Activated CD4-positive, alpha-beta T cell treated with anti-CD3 and anti-CD28 coated beads for 36 hours (primary cell): ENCODE measurements at regions of chr17 and their contacts with region 1.

Region 1: GRCh38 chr17:1365445-1366039 is 34.5 kb downstream of the YWHAE start:
- DNase-seq: peak; percentile 74
- ATAC-seq: peak; percentile 65
- H3K4me3 Mint-ChIP-seq: peak overlapping the region; percentile 21
- H3K27ac Mint-ChIP-seq: no peak overlapping the region
- H3K4me1 Mint-ChIP-seq: peaks cover 71% of the 10 kb centered on the region
- H3K27me3 Mint-ChIP-seq: no peaks in the 10 kb centered on the region

Region 2: DNA sequence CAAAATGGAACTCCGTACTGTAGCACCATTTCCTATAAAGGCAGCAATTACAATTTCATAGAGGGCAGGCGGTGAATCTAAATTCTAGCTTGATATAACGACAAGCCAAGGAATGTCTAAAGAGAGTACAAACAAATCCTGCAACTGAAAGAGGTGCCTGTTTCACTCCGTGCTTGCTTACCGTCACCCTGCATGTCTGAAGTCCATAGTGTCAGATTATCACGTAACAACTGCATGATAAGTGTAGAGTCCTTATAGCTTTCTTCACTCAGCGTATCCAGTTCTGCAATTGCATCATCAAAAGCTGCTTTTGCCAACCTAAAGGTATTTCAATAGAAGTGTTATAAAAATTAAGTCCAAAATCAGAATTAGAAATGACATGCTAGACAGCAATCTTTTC is 11.5 kb before region 1 on chr17:
- CTCF ChIA-PET with region 1: interaction called, 24 read pairs
- POLR2A ChIA-PET with region 1: no interaction called
- intact Hi-C with region 1: no loop called
- DNase-seq: no peak
- ATAC-seq: no peak
- H3K4me3 Mint-ChIP-seq: no peak overlapping the region
- H3K27ac Mint-ChIP-seq: no peak overlapping the region
- H3K4me1 Mint-ChIP-seq: peaks cover 9% of the 10 kb centered on the region
- H3K27me3 Mint-ChIP-seq: no peaks in the 10 kb centered on the region

Region 3: GRCh38 chr17:1384905-1385435 is 19.4 kb after region 1 on chr17:
- CTCF ChIA-PET with region 1: interaction called, 121 read pairs
- POLR2A ChIA-PET with region 1: interaction called, 9 read pairs
- intact Hi-C with region 1: no loop called
- DNase-seq: no peak
- ATAC-seq: no peak
- H3K4me3 Mint-ChIP-seq: no peak overlapping the region
- H3K27ac Mint-ChIP-seq: peak overlapping the region; percentile 51
- H3K4me1 Mint-ChIP-seq: peaks cover 66% of the 10 kb centered on the region
- H3K27me3 Mint-ChIP-seq: no peaks in the 10 kb centered on the region

Region 4: DNA sequence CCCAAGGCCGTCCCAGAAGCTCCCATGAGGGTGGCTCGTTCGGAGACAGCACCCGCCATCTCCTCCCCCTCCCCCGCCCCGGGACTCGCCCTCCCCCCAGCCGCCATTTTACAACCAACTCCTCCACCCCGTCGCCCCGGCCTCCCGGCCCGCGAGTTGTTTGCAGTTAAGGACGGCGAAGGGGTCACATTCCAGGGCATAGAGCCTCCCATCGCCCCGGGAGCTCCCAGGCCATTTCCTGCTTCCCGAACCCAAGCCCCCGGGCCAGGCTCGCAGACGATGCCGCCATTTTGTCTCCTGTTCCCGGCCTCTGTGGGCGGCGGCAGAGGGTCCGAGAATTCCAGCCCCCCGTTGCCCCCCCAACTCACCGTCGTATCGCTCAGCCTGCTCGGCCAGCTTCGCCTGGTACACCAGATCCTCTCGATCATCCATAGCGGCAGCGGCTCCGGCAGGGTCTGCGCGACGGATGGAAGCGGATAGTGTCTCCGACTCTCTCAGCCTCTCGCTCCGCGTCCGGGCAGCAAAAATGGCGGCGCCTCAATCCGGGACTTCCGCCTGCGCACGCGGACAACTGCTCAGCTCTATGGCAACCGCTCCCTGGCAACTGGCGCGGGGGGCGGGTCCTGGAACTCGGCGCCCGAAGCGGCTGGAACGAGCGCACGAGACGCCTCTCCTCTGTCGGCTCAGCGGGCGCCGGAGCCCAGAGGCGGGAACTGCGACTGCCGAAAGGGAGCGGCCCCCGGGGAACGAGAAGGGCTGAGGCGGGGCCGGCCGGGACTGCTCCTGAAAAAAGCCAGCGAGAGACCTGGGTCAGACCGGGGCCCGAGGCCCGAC is 34.4 kb after region 1 on chr17 and contains the start of gene YWHAE:
- CTCF ChIA-PET with region 1: interaction called, 34 read pairs
- POLR2A ChIA-PET with region 1: interaction called, 5 read pairs
- intact Hi-C with region 1: loop called (anchors 1 to 2 kb)
- DNase-seq: peak; percentile 99
- ATAC-seq: peak; percentile 95
- H3K4me3 Mint-ChIP-seq: peak within 1 kb of the TSS; percentile 100
- H3K27ac Mint-ChIP-seq: peak within 1 kb of the TSS; percentile 100
- H3K4me1 Mint-ChIP-seq: peaks cover 27% of the 10 kb centered on the region
- H3K27me3 Mint-ChIP-seq: no peaks in the 10 kb centered on the region
- total RNA-seq, gene YWHAE: 520 to 553 TPM

Region 5: GRCh38 chr17:1455797-1456599 is 90.5 kb after region 1 on chr17 and contains the start of gene CRK:
- CTCF ChIA-PET with region 1: interaction called, 6 read pairs
- POLR2A ChIA-PET with region 1: interaction called, 8 read pairs
- intact Hi-C with region 1: loop called (anchors 2 to 5 kb)
- DNase-seq: peak; percentile 99
- ATAC-seq: peak; percentile 93
- H3K4me3 Mint-ChIP-seq: peak within 1 kb of the TSS; percentile 82
- H3K27ac Mint-ChIP-seq: peak within 1 kb of the TSS; percentile 89
- H3K4me1 Mint-ChIP-seq: peaks cover 46% of the 10 kb centered on the region
- H3K27me3 Mint-ChIP-seq: peaks cover 9% of the 10 kb centered on the region
- total RNA-seq, gene CRK: 10.1 to 11.6 TPM

Region 6: DNA sequence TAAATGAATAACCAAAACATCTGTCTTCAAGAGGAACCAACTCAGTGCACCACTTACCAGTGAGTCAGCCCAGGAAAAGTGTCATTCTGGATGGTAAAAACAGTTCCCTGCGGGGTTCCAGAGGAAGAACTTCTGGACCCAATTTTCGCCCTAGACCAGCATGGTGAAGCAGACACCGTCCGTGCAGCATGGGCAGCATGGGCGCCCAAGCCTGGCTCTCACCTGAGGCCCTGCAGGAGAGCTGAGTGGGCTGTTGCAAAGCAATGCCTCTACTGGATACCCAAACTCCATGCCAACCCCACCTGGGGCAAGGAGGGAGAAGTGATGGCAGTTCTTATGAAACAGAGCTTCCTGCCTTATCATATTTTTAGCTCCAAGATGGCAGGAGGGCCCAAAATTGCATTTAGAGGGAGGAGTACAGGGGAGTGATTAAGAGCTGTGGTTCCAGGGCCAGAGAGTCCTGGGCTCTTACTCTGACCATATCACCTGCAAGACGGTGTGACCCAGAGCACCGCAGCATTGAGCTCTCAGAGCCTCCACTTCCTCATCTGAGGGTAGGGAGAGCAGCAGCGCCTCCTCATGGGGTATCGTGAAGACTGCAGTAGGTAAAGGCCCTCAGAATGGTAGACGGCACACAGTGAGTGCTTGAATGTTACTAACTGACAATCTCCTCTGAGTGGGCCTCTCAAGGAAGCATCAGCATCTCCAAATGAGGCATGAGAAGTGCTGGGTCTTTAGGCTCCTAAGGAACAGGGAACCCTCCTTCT is 167.5 kb after region 1 on chr17:
- CTCF ChIA-PET with region 1: interaction called, 34 read pairs
- POLR2A ChIA-PET with region 1: interaction called, 6 read pairs
- intact Hi-C with region 1: loop called in 1 of 2 experiments (anchors 5 kb)
- DNase-seq: peak; percentile 72
- ATAC-seq: peak; percentile 86
- H3K4me3 Mint-ChIP-seq: no peak overlapping the region
- H3K27ac Mint-ChIP-seq: no peak overlapping the region
- H3K4me1 Mint-ChIP-seq: peaks cover 5% of the 10 kb centered on the region
- H3K27me3 Mint-ChIP-seq: no peaks in the 10 kb centered on the region